Ascending aorta (tissue), 2 donors: ENCODE measurements at regions of chr1 and their contacts with region 1.

Region 1: GRCh38 chr1:156456622-156457465 is 43.7 kb downstream of the MEF2D start:
- DNase-seq: peak; percentile 96 to 99
- H3K4me3 ChIP-seq: peak overlapping the region; percentile 62 to 70
- H3K27ac ChIP-seq: peak overlapping the region; percentile 98 to 99
- H3K4me1 ChIP-seq: peaks cover 5 to 17% of the 10 kb centered on the region in 2 donors
- H3K27me3 ChIP-seq: no peaks in the 10 kb centered on the region
- CTCF ChIP-seq: no peak

Region 2: DNA sequence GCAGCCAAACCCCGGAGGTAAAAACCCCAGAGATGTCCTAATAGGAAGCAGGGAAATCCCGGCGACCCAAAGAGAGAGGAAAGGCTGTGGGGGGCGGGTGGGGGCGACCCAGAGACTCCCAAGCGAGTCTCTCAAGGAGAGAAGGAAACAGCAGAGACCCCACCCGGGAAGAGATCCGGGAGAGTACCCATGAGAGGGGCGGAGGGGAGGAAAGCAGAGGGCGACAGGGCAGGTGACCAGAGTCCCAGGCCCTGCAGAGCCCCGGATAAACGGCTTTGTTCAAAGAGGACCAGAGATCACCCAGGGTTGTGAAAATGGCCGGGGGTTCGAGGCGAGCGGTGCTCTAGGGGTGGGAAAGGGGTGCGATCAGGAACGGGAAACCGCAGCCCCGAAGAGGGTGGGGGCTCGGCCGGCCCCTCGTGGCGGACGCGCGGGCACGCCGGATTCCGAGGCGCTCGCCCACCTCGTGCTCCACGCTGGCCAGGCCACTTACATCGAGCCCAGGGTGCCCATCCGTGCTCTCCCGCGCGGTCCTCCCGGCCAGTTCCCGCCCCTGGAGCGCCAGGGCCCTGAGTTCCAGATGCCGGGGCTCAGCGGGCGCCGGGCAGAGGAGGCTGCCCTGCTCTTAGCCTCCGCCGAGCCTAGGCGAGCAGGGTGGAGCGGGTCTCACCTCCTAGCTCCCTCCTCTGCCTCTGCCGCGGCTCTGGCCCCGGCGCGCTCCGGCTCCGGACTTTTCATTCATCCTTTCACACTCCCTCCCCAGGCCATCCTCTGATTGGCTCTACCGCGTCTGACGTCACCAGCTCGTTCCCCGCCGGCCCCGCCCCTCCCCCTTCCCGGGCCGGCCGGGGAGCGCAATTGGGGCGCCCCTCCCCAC is 35.5 kb before region 1 on chr1:
- intact Hi-C with region 1: no loop called
- DNase-seq: peak; percentile 38 to 82
- H3K4me3 ChIP-seq: peak overlapping the region; percentile 51 to 61
- H3K27ac ChIP-seq: no peak overlapping the region
- H3K4me1 ChIP-seq: peaks cover 15 to 16% of the 10 kb centered on the region in 2 donors
- H3K27me3 ChIP-seq: peaks cover 27% of the 10 kb centered on the region
- CTCF ChIP-seq: no peak

Region 3: DNA sequence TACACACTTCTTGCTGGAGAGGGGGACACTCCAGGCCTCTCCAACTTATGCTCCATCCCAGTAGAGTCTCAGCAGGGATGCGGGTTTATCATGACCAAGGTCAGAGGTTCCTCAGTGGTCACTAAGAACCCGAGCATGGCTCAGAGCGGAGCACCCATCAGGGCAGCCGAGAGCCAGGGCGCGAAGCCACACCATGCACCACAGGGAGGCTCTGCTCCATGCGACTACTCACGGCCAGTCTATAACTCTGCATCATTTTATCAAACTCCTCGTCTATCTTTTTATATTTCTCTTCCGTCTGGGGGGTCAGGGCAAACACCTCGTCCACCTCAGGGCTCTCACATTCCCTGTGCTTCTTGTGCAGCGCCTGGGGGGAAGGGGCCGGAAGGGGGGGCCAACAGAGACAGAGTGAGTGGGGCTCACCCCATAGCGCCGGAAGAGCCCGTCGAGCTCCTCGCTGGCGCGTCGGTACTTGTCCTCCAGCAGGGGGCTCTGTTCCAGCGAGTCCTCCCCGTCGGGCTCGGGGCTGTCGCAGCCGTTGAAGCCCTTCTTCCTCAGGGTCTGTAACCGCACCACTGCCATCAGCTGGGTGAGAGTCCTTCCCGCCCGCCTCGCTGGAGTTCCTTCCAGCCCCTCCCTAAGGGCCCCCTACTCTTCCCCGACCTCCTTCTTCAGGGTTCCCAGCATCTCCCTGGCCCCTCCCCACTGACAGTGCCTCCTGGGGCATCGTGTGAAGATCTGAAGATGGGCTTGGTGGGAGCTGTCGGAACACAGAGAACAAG is 23.8 kb after region 1 on chr1:
- intact Hi-C with region 1: loop called (anchors 1 kb)
- DNase-seq: no peak
- H3K4me3 ChIP-seq: no peak overlapping the region
- H3K27ac ChIP-seq: peak overlapping the region; percentile 86 to 87
- H3K4me1 ChIP-seq: peaks cover 26 to 80% of the 10 kb centered on the region in 2 donors
- H3K27me3 ChIP-seq: no peaks in the 10 kb centered on the region
- CTCF ChIP-seq: peak; percentile 58 to 64 (median 62)

Region 4: DNA sequence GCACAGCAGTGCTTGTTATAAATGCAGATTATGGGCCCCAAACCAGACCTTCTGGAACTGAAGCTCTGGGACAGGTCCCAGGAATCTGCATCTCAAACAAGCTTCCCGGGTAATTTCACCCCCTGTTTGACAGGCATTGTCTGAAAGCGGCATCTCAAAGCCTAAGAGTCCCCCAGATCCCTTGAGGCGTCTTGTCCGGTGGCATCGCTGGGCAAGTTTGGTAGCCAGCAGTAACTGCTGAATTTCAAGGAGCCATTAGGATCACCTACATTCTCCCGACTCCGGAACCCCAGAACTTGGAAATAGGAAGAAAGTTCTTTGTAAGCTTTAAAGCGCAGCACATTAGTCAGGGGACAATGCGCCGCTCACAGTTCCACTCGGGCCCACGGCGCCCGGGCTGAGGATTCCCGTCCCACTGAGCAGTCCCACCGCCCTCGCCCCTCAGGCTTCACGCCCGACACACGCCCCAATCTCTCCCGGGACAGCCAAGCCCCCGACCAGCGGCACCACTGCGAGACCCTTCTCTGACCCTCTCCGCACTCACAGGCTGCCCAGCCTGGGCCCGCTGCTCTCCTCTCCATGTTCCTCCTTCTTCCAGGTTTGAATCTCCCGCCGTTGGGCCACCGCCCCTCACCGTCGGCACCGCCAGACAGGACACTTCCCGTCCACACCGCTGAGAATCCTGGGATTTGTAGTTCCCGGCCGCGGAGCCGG is 115.3 kb after region 1 on chr1 and contains the start of gene IQGAP3:
- intact Hi-C with region 1: loop called (anchors 2 kb)
- DNase-seq: peak; percentile 48 to 91
- H3K4me3 ChIP-seq: peak within 1 kb of the TSS; percentile 27 to 54
- H3K27ac ChIP-seq: no peak within 1 kb of the TSS
- H3K4me1 ChIP-seq: peaks cover 0 to 5% of the 10 kb centered on the region in 2 donors
- H3K27me3 ChIP-seq: no peaks in the 10 kb centered on the region
- CTCF ChIP-seq: no peak
- total RNA-seq, gene IQGAP3: not detected

Region 5: GRCh38 chr1:156608036-156608674 is 151.3 kb after region 1 on chr1:
- intact Hi-C with region 1: loop called (anchors 1 kb)
- DNase-seq: no peak
- H3K4me3 ChIP-seq: peak overlapping the region in 1 of 2 donors; percentile 15
- H3K27ac ChIP-seq: no peak overlapping the region
- H3K4me1 ChIP-seq: no peaks in the 10 kb centered on the region
- H3K27me3 ChIP-seq: no peaks in the 10 kb centered on the region
- CTCF ChIP-seq: peak; percentile 80 to 86 (median 82)